ENCODE measurements at regions of chr12 and their contacts with region 1.

Region 1: DNA sequence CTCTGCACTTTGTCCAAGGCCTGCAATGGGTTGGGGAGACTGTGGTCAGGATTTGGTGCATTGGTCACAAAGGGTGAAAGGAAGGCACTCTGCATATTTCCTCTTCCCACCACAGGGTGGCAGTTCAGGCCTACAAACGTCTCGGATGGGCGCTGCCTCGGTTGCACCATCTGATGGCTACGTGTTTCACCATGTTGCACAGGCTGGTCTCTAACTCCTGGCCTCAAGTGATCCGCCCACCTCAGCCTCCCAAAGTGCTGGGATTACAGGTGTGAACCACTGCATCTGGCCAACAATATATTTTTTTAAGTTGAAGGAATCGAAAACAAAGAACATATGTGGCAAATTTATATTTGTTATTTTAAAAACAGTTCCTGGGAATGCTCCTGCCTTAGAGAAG is 35.1 kb downstream of the TMBIM6 start:
- DNase-seq: peak; percentile 79
- ATAC-seq: peak; percentile 93
- H3K4me3 Mint-ChIP-seq: no peak overlapping the region
- H3K27ac Mint-ChIP-seq: no peak overlapping the region
- H3K4me1 Mint-ChIP-seq: peaks cover 15% of the 10 kb centered on the region
- H3K27me3 Mint-ChIP-seq: peaks cover 21% of the 10 kb centered on the region

Region 2: DNA sequence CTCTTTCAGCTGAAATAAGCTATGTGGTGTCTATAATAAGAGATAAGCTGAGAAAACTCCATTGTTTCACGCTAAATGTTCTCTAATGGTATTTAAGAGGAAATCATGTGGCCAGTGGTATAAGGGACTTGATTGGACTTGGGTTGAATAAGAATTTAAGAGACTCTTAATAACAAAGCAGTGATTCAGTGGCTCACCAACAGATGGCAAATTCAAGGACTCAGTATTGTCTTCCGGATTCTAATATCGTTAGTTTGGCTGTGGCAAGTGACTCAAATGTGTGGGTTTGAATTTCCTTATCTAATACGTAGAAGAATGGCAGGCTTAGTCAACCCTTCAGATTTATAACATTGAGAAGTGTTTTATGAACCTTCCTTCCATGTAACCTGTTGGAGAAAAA is 286.7 kb before region 1 on chr12:
- CTCF ChIA-PET with region 1: no interaction called
- DNase-seq: no peak
- ATAC-seq: no peak
- H3K4me3 Mint-ChIP-seq: no peak overlapping the region
- H3K27ac Mint-ChIP-seq: no peak overlapping the region
- H3K4me1 Mint-ChIP-seq: no peaks in the 10 kb centered on the region
- H3K27me3 Mint-ChIP-seq: no peaks in the 10 kb centered on the region

Region 3: DNA sequence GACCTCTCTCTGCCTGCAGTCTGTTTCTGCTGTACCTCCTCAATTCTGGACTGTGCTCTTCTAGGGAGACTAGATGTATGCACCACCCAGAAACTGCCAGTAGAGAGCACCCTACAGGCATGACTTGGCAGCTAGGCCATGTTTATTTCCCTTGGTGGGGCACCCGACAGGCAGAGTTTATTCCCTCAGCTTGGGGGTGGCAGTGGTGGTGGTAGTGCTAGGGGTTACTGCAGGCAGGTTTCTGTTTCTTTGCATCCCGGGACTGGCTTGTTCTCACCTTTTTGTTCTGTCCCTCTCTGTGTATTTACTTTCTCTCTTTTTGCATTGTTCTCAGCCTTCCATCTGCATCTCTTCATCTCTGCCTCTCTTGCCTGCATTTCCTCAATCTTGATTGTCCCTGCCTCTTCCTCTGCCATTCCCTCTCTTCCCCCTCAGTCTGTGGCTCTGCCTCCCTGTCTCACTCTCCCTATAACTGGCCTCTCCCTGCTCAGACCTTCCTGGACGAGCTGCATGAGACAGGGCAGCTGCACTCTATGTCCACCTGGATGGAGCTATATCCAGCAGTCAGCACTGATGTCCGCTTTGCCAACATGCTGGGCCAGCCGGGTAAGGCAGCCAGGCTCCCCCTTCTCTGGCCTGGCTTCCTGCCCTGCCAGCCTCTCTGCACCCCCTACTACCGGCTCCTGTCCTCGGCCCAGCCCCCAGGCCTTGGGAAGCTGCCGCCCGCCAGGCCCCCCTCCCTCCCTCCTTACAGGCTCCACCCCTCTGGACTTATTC is 139.2 kb before region 1 on chr12:
- CTCF ChIA-PET with region 1: interaction called, 10 read pairs
- DNase-seq: peak; percentile 79
- ATAC-seq: peak; percentile 91
- H3K4me3 Mint-ChIP-seq: no peak overlapping the region
- H3K27ac Mint-ChIP-seq: no peak overlapping the region
- H3K4me1 Mint-ChIP-seq: peaks cover 19% of the 10 kb centered on the region
- H3K27me3 Mint-ChIP-seq: no peaks in the 10 kb centered on the region

Region 4: DNA sequence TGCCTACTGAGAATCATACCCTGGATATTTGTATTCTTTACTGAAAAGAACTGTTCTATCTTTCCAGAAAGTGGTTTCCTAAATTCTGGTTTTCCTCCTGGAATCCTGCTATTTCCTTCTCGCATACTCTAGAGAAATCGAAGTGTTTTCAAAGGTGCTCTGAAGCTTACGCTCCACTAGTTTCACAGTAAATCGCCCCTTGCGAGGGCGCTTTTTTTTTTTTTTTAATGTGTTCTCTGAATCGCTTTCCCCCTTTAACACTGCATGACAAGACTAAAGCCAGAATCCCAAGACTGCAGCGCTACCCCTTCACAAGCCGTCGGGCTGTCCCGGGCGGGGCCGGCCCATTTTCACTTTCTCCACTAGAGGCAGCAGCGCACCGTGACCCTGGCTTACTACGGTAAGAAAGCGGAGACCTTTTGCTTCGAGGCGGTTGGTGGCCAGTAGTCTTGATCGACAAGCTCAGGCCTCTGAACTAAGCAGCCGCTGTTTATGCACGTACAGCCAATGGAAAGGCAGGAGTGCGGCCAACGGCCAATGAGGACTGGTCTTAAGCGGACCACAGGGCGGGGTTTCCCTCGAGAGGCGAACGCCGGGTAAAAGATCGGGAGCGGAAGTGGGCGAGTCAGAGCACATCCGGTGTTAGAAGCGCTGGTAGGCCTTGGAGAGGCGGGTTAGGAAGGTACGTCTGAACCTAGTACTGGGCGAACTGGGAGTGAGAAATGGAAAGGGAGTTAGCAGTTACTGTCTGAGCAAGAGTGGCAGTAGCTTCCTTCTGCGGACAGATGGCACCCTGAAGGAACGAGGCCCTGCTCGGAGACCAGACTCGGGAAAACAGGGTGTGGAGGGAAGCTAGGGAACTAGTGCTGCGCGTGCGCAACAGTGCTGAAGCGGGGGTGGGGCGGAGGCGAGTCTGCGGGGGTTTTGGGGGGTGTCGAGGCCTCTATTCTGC is 35.2 kb before region 1 on chr12 and contains the start of gene TMBIM6:
- CTCF ChIA-PET with region 1: interaction called, 30 read pairs
- DNase-seq: peak; percentile 100
- ATAC-seq: peak; percentile 91
- H3K4me3 Mint-ChIP-seq: peak within 1 kb of the TSS; percentile 98
- H3K27ac Mint-ChIP-seq: peak within 1 kb of the TSS; percentile 100
- H3K4me1 Mint-ChIP-seq: peaks cover 44% of the 10 kb centered on the region
- H3K27me3 Mint-ChIP-seq: no peaks in the 10 kb centered on the region
- total RNA-seq, gene TMBIM6: 396 to 524 TPM

Region 5: DNA sequence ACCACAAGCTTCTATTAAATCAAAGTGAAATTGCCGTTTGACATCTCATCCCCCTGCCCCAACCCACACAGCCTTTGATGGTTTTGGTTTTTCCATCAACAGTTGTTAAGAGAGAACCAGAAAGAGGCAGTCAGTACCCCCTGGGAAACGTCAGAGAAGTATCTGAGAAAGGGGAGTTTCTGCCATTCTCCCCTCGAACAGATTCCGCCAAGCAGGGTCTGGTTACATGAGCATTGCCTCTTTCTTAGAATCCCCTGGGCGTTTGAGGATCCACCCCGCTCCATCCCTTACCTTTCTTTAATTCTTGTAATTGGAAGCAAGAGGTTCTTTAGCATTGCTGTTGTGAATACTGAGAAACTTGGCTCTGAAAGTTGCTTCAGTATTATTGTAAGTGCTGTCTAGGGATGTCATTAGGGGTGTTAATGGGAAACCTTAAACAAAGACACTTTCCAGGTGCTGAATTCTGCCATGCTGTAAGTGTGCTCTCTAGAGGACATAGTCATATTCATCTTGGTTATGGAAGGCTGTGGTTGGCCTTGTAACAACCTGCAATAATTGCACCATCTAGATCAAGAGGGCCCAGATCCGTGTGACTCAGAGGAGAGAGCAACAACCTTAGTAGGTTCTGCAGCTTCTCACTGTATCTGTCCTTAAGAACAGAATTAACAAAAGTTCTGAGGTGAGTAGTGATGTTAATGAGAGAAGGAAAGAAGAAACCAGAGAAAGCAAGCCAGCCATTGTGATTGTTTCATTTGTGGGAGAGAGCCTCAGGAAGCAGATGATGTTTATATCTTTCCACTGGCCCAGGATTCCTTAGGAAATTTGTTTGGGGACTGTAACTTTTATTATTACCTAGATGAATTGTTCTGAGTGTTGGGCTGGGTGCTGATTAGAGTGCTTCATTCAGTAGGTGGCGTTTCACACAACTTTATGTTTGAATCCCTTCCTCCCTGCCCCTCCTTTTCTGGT is 26.1 kb before region 1 on chr12:
- CTCF ChIA-PET with region 1: interaction called, 10 read pairs
- DNase-seq: peak; percentile 79
- ATAC-seq: peak; percentile 85
- H3K4me3 Mint-ChIP-seq: peak overlapping the region; percentile 57
- H3K27ac Mint-ChIP-seq: peak overlapping the region; percentile 94
- H3K4me1 Mint-ChIP-seq: peaks cover 78% of the 10 kb centered on the region
- H3K27me3 Mint-ChIP-seq: no peaks in the 10 kb centered on the region

Region 6: GRCh38 chr12:49763006-49763591 is 13.3 kb before region 1 on chr12:
- CTCF ChIA-PET with region 1: interaction called, 25 read pairs
- DNase-seq: peak; percentile 88
- ATAC-seq: peak; percentile 74
- H3K4me3 Mint-ChIP-seq: peak overlapping the region; percentile 17
- H3K27ac Mint-ChIP-seq: peak overlapping the region; percentile 85
- H3K4me1 Mint-ChIP-seq: peaks cover 52% of the 10 kb centered on the region
- H3K27me3 Mint-ChIP-seq: no peaks in the 10 kb centered on the region

Region 7: GRCh38 chr12:49828133-49829091 is 52.0 kb after region 1 on chr12 and contains the start of gene NCKAP5L:
- CTCF ChIA-PET with region 1: interaction called, 22 read pairs
- DNase-seq: peak; percentile 94
- ATAC-seq: peak; percentile 97
- H3K4me3 Mint-ChIP-seq: peak within 1 kb of the TSS; percentile 82
- H3K27ac Mint-ChIP-seq: peak within 1 kb of the TSS; percentile 70
- H3K4me1 Mint-ChIP-seq: peaks cover 15% of the 10 kb centered on the region
- H3K27me3 Mint-ChIP-seq: peaks cover 27% of the 10 kb centered on the region
- total RNA-seq, gene NCKAP5L: 1.1 to 1.4 TPM

Region 8: DNA sequence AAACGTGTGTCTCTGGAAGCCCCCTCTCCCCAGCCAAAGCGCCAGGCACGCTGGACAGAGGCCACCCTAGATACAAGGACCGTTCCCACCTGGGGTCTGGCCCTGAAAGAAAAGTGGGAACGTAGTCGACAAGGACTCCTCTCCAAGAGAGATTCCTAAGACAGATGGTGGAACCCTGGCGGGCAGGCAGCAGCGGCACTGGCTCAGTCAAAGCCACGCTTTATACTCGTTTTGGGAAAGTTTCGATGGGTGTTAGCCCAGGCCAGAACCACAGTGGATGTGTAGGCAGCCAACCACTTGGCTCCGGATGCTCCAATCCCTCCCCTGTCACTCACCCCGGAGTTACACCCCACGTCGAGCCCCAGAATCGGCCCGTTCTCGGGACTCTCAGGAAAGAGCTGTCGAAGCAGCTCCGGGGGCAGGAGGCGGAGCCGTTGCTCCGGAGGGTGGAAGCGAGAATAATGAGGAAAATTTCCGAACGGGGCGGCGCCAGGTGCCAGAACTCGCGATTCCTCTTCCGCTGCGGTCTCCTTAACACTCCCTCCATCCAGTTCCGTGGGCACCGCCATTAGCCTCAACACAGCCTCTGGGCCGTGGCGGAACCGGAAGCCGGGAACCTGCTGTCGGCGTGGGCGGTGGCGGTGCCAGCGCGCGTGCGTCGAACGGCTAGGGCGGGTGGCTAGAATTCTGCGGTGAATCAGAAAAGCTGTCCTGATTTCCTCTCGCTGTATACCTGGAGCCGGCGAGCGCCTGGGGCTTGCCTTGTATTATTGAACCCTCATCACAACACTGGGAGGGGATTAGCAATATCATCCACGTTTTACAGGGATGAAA is 66.3 kb after region 1 on chr12 and contains the start of gene BCDIN3D:
- CTCF ChIA-PET with region 1: interaction called, 51 read pairs
- DNase-seq: peak; percentile 94
- ATAC-seq: peak; percentile 96
- H3K4me3 Mint-ChIP-seq: peak within 1 kb of the TSS; percentile 91
- H3K27ac Mint-ChIP-seq: peak within 1 kb of the TSS; percentile 90
- H3K4me1 Mint-ChIP-seq: peaks cover 37% of the 10 kb centered on the region
- H3K27me3 Mint-ChIP-seq: no peaks in the 10 kb centered on the region
- total RNA-seq, gene BCDIN3D: 8.2 to 8.3 TPM

Region 9: GRCh38 chr12:49880756-49881414 is 104.5 kb after region 1 on chr12:
- CTCF ChIA-PET with region 1: no interaction called
- DNase-seq: no peak
- ATAC-seq: no peak
- H3K4me3 Mint-ChIP-seq: no peak overlapping the region
- H3K27ac Mint-ChIP-seq: no peak overlapping the region
- H3K4me1 Mint-ChIP-seq: no peaks in the 10 kb centered on the region
- H3K27me3 Mint-ChIP-seq: peaks cover 3% of the 10 kb centered on the region

Region 10: DNA sequence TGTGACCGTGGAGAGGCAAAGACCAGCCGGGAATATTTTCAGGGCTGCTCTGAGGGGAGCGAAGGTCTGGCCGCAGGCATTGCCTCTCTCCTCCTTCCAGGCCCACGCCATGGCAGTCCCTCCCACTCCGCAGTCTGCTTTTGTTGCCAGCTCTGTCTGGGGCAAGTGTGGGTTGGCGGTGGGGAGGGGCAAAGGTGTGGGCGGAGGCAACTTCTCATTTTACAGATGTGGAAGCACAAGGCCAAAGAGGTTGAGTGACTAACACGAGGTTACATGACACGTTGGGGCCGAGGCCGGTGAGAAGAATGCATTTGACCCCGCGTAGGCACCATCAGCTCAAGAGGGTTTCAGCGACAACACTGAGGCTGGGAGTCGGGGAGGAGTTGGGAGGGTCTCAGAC is 133.4 kb after region 1 on chr12:
- CTCF ChIA-PET with region 1: no interaction called
- DNase-seq: no peak
- ATAC-seq: no peak
- H3K4me3 Mint-ChIP-seq: no peak overlapping the region
- H3K27ac Mint-ChIP-seq: no peak overlapping the region
- H3K4me1 Mint-ChIP-seq: no peaks in the 10 kb centered on the region
- H3K27me3 Mint-ChIP-seq: peaks cover 20% of the 10 kb centered on the region

Measured in activated CD8-positive, alpha-beta memory T cell treated with anti-CD3 and anti-CD28 coated beads, Interleukin-2, amount 10 ng/mL, durations not matched to agents 7 days and 5 days (primary cell).